ENCODE measurements at regions of chr3 and their contacts with region 1.

Region 1: GRCh38 chr3:49856181-49857005 is at the start of gene TRAIP:
- DNase-seq: peak; percentile 90
- H3K4me3 ChIP-seq: peak within 1 kb of the TSS; percentile 67 to 75 (median 75)
- H3K27ac ChIP-seq: peak within 1 kb of the TSS; percentile 14
- H3K4me1 ChIP-seq: peaks cover 9% of the 10 kb centered on the region
- H3K27me3 ChIP-seq: no peaks in the 10 kb centered on the region
- CTCF ChIP-seq: no peak
- total RNA-seq, gene TRAIP: 1.7 to 12.6 TPM

Region 2: GRCh38 chr3:49723628-49724551 is 132.5 kb before region 1 on chr3 and contains the start of gene GMPPB:
- CTCF ChIA-PET with region 1: no interaction called
- dilution Hi-C with region 1: loop called (anchors 5 kb)
- in situ Hi-C with region 1: no loop called
- intact Hi-C with region 1: no loop called
- DNase-seq: peak; percentile 97
- H3K4me3 ChIP-seq: peak within 1 kb of the TSS; percentile 51 to 85 (median 84)
- H3K27ac ChIP-seq: peak within 1 kb of the TSS; percentile 92
- H3K4me1 ChIP-seq: peaks cover 25% of the 10 kb centered on the region
- H3K27me3 ChIP-seq: no peaks in the 10 kb centered on the region
- CTCF ChIP-seq: no peak
- total RNA-seq, gene GMPPB: 19.2 to 38.4 TPM

Region 3: GRCh38 chr3:49747792-49748480 is 108.5 kb before region 1 on chr3:
- CTCF ChIA-PET with region 1: no interaction called
- dilution Hi-C with region 1: loop called (anchors 5 kb)
- in situ Hi-C with region 1: no loop called
- intact Hi-C with region 1: no loop called
- DNase-seq: peak; percentile 67
- H3K4me3 ChIP-seq: no peak overlapping the region
- H3K27ac ChIP-seq: no peak overlapping the region
- H3K4me1 ChIP-seq: peaks cover 14% of the 10 kb centered on the region
- H3K27me3 ChIP-seq: no peaks in the 10 kb centered on the region
- CTCF ChIP-seq: no peak

Region 4: GRCh38 chr3:49775538-49775937 is 80.9 kb before region 1 on chr3:
- CTCF ChIA-PET with region 1: no interaction called
- dilution Hi-C with region 1: loop called (anchors 5 kb)
- in situ Hi-C with region 1: no loop called
- intact Hi-C with region 1: no loop called
- DNase-seq: no peak
- H3K4me3 ChIP-seq: no peak overlapping the region
- H3K27ac ChIP-seq: no peak overlapping the region
- H3K4me1 ChIP-seq: no peaks in the 10 kb centered on the region
- H3K27me3 ChIP-seq: no peaks in the 10 kb centered on the region
- CTCF ChIP-seq: no peak

Region 5: DNA sequence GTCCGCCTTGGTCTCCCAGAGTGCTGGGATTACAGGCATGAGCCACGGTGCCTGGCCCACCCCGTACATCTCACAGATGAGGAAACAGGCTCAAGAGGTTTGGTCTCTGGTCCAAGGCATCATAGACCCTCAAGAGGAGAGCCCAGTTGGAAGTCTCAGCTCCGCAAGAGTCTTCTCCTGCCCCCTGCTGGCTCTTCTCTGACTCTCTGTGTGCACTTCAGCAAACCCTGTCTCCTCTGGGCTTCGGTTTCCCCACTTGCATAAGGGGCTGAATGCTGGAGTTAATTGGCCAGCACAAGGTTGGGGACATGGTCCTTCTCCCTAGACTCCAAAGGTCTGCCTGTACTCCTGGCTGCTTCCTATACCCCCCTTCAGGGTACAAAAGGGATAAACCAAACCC is 43.4 kb after region 1 on chr3:
- CTCF ChIA-PET with region 1: no interaction called
- dilution Hi-C with region 1: loop called (anchors 5 kb)
- in situ Hi-C with region 1: no loop called
- intact Hi-C with region 1: loop called (anchors 1 kb)
- DNase-seq: no peak
- H3K4me3 ChIP-seq: peak overlapping the region in 1 of 3 experiments; percentile 14
- H3K27ac ChIP-seq: peak overlapping the region; percentile 84
- H3K4me1 ChIP-seq: peaks cover 62% of the 10 kb centered on the region
- H3K27me3 ChIP-seq: no peaks in the 10 kb centered on the region
- CTCF ChIP-seq: peak in 1 of 2 donors; percentile 24

Region 6: GRCh38 chr3:49906004-49906743 is 49.8 kb after region 1 on chr3:
- CTCF ChIA-PET with region 1: no interaction called
- dilution Hi-C with region 1: no loop called
- in situ Hi-C with region 1: no loop called
- intact Hi-C with region 1: loop called (anchors 1 kb)
- DNase-seq: peak; percentile 60
- H3K4me3 ChIP-seq: peak overlapping the region; percentile 17 to 34 (median 25)
- H3K27ac ChIP-seq: peak overlapping the region; percentile 31
- H3K4me1 ChIP-seq: peaks cover 48% of the 10 kb centered on the region
- H3K27me3 ChIP-seq: no peaks in the 10 kb centered on the region
- CTCF ChIP-seq: peak; percentile 59 to 83

Region 7: GRCh38 chr3:49929331-49930240 is 73.2 kb after region 1 on chr3 and contains the start of gene MON1A:
- CTCF ChIA-PET with region 1: no interaction called
- dilution Hi-C with region 1: loop called (anchors 5 kb)
- in situ Hi-C with region 1: no loop called
- intact Hi-C with region 1: no loop called
- DNase-seq: peak; percentile 89
- H3K4me3 ChIP-seq: peak within 1 kb of the TSS; percentile 65 to 72 (median 66)
- H3K27ac ChIP-seq: no peak within 1 kb of the TSS
- H3K4me1 ChIP-seq: peaks cover 25% of the 10 kb centered on the region
- H3K27me3 ChIP-seq: no peaks in the 10 kb centered on the region
- CTCF ChIP-seq: peak in 1 of 2 donors; percentile 47
- total RNA-seq, gene MON1A: 11.5 to 15.9 TPM

Region 8: GRCh38 chr3:50008931-50009330 is 152.5 kb after region 1 on chr3:
- CTCF ChIA-PET with region 1: no interaction called
- dilution Hi-C with region 1: no loop called
- in situ Hi-C with region 1: no loop called
- intact Hi-C with region 1: no loop called
- DNase-seq: peak; percentile 48
- H3K4me3 ChIP-seq: no peak overlapping the region
- H3K27ac ChIP-seq: no peak overlapping the region
- H3K4me1 ChIP-seq: peaks cover 8% of the 10 kb centered on the region
- H3K27me3 ChIP-seq: no peaks in the 10 kb centered on the region
- CTCF ChIP-seq: no peak

Measured in mammary epithelial cell (primary cell).